ENCODE measurements at regions of chr3 and their contacts with region 1.

Region 1: GRCh38 chr3:186815435-186815834 is 9.2 kb upstream of the RFC4 start:
- DNase-seq: no peak
- CTCF ChIP-seq: no peak

Region 2: GRCh38 chr3:186476044-186476468 is 339.4 kb before region 1 on chr3:
- in situ Hi-C with region 1: no loop called
- DNase-seq: peak; percentile 15
- CTCF ChIP-seq: no peak

Region 3: GRCh38 chr3:186617038-186617946 is 198.1 kb before region 1 on chr3:
- in situ Hi-C with region 1: loop called (anchors 10 kb)
- DNase-seq: peak; percentile 87
- CTCF ChIP-seq: peak; percentile 91

Region 4: DNA sequence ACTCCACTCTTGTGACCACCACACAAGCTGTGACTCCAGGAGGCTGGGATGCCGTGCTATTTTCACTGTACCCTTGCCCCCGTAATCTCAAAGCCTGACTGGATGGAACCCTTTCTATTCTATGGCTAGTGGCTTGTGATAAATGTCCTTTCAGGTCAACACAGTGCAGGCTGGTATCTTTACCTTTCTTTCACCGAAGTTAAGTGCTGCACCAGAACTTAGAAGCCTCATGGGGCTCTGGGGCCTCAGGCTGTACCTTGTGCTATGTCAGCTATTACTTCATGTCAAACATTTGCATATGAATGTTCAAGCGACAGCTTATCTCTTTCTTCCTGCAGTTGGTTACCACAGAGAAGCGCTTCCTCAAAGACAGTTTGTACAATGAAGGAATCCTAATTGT is 257.1 kb after region 1 on chr3:
- in situ Hi-C with region 1: no loop called
- DNase-seq: peak; percentile 19
- CTCF ChIP-seq: no peak